GM12878 (cell line): ENCODE measurements at regions of chr11 and their contacts with region 1.

Region 1: GRCh38 chr11:11787305-11788062 is 54.3 kb upstream of the USP47 start:
- DNase-seq: peak; percentile 23
- ATAC-seq: peak; percentile 98
- H3K4me3 ChIP-seq: no peak overlapping the region
- H3K27ac ChIP-seq: no peak overlapping the region
- H3K4me1 ChIP-seq: no peaks in the 10 kb centered on the region
- H3K27me3 ChIP-seq: no peaks in the 10 kb centered on the region; a peak in 1 of 4 replicates
- CTCF ChIP-seq: peak; percentile 68 to 86 (median 81)
- EP300 ChIP-seq: no peak
- POLR2A ChIP-seq: no peak
- RAD21 ChIP-seq: peak; percentile 95

Region 2: GRCh38 chr11:11028017-11028692 is 759.3 kb before region 1 on chr11:
- CTCF ChIA-PET with region 1: interaction called, 99 read pairs
- POLR2A ChIA-PET with region 1: no interaction called
- RAD21 ChIA-PET with region 1: interaction called, 42 read pairs
- SMC1A ChIA-PET with region 1: interaction called, 37 read pairs
- in situ Hi-C with region 1: loop called (anchors 5 kb)
- intact Hi-C with region 1: loop called (anchors 1 kb)
- DNase-seq: no peak
- ATAC-seq: peak; percentile 97
- H3K4me3 ChIP-seq: no peak overlapping the region
- H3K27ac ChIP-seq: no peak overlapping the region
- H3K4me1 ChIP-seq: no peaks in the 10 kb centered on the region
- H3K27me3 ChIP-seq: peaks cover 0 to 2% of the 10 kb centered on the region in 2 experiments; a peak in 2 of 4 replicates
- CTCF ChIP-seq: peak; percentile 81 to 88 (median 83)
- EP300 ChIP-seq: no peak
- POLR2A ChIP-seq: no peak
- RAD21 ChIP-seq: peak; percentile 74

Region 3: DNA sequence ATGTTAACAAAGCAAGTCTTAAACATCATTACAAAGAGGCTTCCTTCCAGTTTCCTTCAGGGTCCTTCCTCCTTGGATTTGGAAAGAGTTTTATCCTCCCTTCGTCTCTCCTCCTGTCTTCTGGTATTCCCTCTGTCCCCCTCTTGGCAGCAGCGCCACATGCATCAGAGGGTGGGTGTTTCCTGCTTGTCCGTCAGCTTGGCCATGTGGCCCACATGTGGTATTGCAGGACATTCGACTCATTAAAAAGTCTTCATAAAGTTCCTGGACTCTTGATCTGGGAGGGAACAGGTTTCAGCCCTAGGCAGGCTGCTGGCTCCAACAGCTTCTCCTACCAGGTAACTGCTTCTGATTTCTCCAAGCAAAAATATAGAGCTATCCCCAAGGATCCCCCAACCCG is 624.2 kb before region 1 on chr11:
- CTCF ChIA-PET with region 1: no interaction called
- POLR2A ChIA-PET with region 1: no interaction called
- RAD21 ChIA-PET with region 1: no interaction called
- SMC1A ChIA-PET with region 1: no interaction called
- in situ Hi-C with region 1: no loop called
- intact Hi-C with region 1: loop called (anchors 10 kb)
- DNase-seq: no peak
- ATAC-seq: no peak
- H3K4me3 ChIP-seq: no peak overlapping the region
- H3K27ac ChIP-seq: no peak overlapping the region
- H3K4me1 ChIP-seq: no peaks in the 10 kb centered on the region
- H3K27me3 ChIP-seq: no peaks in the 10 kb centered on the region; a peak in 2 of 4 replicates
- CTCF ChIP-seq: no peak
- EP300 ChIP-seq: no peak
- POLR2A ChIP-seq: no peak
- RAD21 ChIP-seq: no peak

Region 4: DNA sequence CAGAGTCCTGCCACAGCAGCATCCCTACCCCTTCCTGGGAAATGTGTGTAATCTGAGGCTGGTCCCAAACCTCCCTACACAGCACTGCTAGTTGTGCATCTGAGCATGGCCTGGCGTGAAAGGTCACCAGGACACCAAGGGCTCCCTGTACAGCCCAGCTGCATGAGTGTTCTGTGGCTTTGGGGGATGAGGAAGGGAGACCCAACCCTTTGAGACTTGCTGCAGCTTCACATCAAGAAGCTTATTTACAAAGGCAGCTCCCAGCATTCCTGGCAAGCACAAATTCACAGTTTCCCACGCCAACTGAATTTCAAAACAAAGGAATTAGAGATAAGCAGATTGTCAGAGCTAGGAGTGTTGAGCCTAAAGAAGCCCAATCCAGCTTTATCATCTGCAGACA is 466.7 kb before region 1 on chr11:
- CTCF ChIA-PET with region 1: no interaction called
- POLR2A ChIA-PET with region 1: no interaction called
- RAD21 ChIA-PET with region 1: no interaction called
- SMC1A ChIA-PET with region 1: no interaction called
- in situ Hi-C with region 1: no loop called
- intact Hi-C with region 1: loop called (anchors 10 kb)
- DNase-seq: no peak
- ATAC-seq: no peak
- H3K4me3 ChIP-seq: no peak overlapping the region
- H3K27ac ChIP-seq: no peak overlapping the region
- H3K4me1 ChIP-seq: no peaks in the 10 kb centered on the region
- H3K27me3 ChIP-seq: no peaks in the 10 kb centered on the region
- CTCF ChIP-seq: no peak
- EP300 ChIP-seq: no peak
- POLR2A ChIP-seq: no peak
- RAD21 ChIP-seq: no peak

Region 5: DNA sequence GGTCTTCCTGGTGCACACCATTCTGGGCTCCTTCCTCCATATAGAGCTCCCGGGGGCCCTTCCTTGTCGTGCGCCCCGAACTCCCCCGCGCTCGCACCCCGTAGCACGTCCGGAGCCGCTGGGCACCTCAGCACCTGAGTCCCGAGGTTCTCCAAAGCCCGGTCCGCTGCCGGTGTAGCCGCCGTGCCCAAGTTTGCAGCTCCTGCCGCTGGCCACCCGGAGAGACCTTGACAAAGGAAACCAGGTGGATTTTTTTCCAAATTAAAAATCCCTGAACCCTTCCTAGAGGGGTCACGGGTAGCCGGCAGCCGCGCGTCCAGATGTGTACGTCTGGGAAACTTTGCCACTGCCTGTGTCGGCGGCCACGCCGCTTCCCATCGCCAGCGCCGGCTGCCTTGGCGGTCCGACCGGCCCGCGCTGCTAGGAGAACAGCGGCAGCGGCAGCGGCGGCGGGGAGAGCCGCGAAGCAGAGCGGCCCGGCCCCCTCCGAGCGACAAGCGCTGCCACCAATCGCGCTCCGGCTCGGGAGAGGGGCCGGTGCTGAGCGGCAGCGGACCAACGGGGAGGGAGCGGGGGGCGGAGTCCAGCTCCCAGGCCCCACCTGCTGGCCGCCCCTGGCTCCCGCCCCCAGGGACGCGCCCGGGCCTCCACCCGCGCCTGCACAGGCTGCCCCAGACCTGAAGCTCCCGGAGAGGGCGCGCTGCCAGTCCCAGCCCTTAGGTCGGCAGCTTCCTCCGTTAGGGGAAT is 165.7 kb before region 1 on chr11 and contains the start of gene GALNT18:
- CTCF ChIA-PET with region 1: interaction called, 5 read pairs
- POLR2A ChIA-PET with region 1: no interaction called
- RAD21 ChIA-PET with region 1: interaction called, 6 read pairs
- SMC1A ChIA-PET with region 1: interaction called, 7 read pairs
- in situ Hi-C with region 1: no loop called
- intact Hi-C with region 1: loop called (anchors 5 kb)
- DNase-seq: peak; percentile 68
- ATAC-seq: peak; percentile 94
- H3K4me3 ChIP-seq: peak within 1 kb of the TSS; percentile 88
- H3K27ac ChIP-seq: peak within 1 kb of the TSS; percentile 41
- H3K4me1 ChIP-seq: no peaks in the 10 kb centered on the region; the same call in 1 of the 2 replicates
- H3K27me3 ChIP-seq: no peaks in the 10 kb centered on the region; a peak in 1 of 4 replicates
- CTCF ChIP-seq: peak in 2 of 3 experiments; percentile 45 to 46; a peak in 4 of 6 replicates
- EP300 ChIP-seq: no peak
- POLR2A ChIP-seq: peak; percentile 79
- RAD21 ChIP-seq: no peak
- polyA plus RNA-seq, gene GALNT18: 1.2 to 2.0 TPM

Region 6: DNA sequence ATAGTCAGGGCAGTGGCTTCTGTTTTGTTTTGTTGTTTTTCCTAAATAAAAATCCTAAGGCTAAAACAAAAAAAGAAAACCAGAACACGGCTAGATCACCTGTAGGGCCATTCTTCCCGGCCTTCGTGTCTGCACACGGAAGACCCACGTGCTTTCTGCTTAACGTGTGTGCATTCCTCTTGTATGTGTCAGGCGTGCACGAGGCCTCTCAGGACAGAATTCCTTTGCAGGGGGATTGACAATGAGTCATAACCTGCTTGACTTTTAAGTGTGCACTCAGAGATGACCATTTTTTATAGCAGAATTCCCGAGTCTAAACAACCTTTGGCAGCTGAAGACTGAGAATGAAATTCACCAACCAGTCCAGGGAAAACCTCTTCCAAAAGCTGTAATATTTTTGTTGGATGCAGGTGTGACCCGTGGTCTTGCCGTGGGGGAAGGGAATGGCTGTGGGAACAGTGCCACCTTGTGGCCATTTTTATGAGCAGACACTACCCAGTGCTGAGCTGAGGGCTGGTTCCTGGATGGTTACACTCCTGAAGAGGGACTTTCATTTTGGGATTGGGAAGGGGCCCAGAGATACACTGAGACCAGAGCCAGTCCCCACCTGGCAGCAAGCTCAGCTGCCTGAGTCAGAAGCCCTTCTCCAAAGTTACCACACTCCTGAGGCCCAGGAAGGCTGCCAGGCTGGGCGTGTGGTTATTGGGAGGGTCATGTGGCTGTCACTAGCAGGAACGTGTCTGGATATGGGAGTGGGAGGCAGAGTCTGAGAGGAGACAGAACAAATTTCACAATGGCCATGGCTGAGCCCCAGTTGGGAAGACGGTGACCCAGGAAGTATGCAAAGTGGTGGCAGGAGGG is 256.7 kb after region 1 on chr11:
- CTCF ChIA-PET with region 1: interaction called, 22 read pairs
- POLR2A ChIA-PET with region 1: no interaction called
- RAD21 ChIA-PET with region 1: no interaction called
- SMC1A ChIA-PET with region 1: interaction called, 3 read pairs
- in situ Hi-C with region 1: no loop called
- intact Hi-C with region 1: loop called (anchors 1 kb)
- DNase-seq: no peak
- ATAC-seq: peak; percentile 90
- H3K4me3 ChIP-seq: no peak overlapping the region
- H3K27ac ChIP-seq: no peak overlapping the region
- H3K4me1 ChIP-seq: no peaks in the 10 kb centered on the region
- H3K27me3 ChIP-seq: no peaks in the 10 kb centered on the region
- CTCF ChIP-seq: peak; percentile 72 to 92 (median 85)
- EP300 ChIP-seq: no peak
- POLR2A ChIP-seq: no peak
- RAD21 ChIP-seq: peak; percentile 88